Activated CD8-positive, alpha-beta T cell treated with anti-CD3 and anti-CD28 coated beads, Interleukin-2, amount 10 ng/mL, durations not matched to agents 7 days and 5 days (primary cell): ENCODE measurements at regions of chr3 and their contacts with region 1.

Region 1: GRCh38 chr3:18717598-18717997 is 292.5 kb upstream of the SATB1 start:
- DNase-seq: no peak
- ATAC-seq: peak; percentile 11
- H3K4me3 Mint-ChIP-seq: peak overlapping the region; percentile 36
- H3K27ac Mint-ChIP-seq: peak overlapping the region; percentile 95
- H3K4me1 Mint-ChIP-seq: peaks cover 75% of the 10 kb centered on the region
- H3K27me3 Mint-ChIP-seq: no peaks in the 10 kb centered on the region

Region 2: GRCh38 chr3:18424729-18425640 is 292.6 kb before region 1 on chr3 and contains the start of gene SATB1:
- CTCF ChIA-PET with region 1: no interaction called
- POLR2A ChIA-PET with region 1: interaction called, 11 read pairs
- DNase-seq: peak; percentile 79
- ATAC-seq: peak; percentile 23
- H3K4me3 Mint-ChIP-seq: peak within 1 kb of the TSS; percentile 87
- H3K27ac Mint-ChIP-seq: peak within 1 kb of the TSS; percentile 88
- H3K4me1 Mint-ChIP-seq: peaks cover 60% of the 10 kb centered on the region
- H3K27me3 Mint-ChIP-seq: no peaks in the 10 kb centered on the region
- total RNA-seq, gene SATB1: 268 to 273 TPM

Region 3: DNA sequence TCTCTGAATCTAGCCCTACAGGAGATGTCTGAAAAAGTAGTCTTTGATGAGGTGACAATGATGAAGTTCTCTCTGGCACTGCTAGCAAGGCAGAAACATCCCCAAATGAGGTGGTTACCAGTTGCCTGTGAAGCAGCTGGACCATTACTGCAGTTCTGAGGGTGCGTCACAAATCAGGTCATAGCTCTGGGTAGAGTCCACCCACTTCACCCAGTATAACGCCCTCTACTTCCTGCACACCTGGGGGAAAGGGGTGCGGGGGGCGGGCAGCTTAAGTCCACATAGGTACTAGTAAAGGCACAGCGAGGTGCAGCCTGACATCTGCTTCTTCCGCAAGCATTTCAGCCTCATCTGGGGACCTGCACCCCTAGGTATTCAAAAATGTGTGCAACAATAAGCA is 279.0 kb before region 1 on chr3:
- CTCF ChIA-PET with region 1: interaction called, 5 read pairs
- POLR2A ChIA-PET with region 1: interaction called, 55 read pairs
- DNase-seq: peak; percentile 83
- ATAC-seq: peak; percentile 79
- H3K4me3 Mint-ChIP-seq: peak overlapping the region; percentile 69
- H3K27ac Mint-ChIP-seq: peak overlapping the region; percentile 80
- H3K4me1 Mint-ChIP-seq: peaks cover 44% of the 10 kb centered on the region
- H3K27me3 Mint-ChIP-seq: no peaks in the 10 kb centered on the region

Region 4: DNA sequence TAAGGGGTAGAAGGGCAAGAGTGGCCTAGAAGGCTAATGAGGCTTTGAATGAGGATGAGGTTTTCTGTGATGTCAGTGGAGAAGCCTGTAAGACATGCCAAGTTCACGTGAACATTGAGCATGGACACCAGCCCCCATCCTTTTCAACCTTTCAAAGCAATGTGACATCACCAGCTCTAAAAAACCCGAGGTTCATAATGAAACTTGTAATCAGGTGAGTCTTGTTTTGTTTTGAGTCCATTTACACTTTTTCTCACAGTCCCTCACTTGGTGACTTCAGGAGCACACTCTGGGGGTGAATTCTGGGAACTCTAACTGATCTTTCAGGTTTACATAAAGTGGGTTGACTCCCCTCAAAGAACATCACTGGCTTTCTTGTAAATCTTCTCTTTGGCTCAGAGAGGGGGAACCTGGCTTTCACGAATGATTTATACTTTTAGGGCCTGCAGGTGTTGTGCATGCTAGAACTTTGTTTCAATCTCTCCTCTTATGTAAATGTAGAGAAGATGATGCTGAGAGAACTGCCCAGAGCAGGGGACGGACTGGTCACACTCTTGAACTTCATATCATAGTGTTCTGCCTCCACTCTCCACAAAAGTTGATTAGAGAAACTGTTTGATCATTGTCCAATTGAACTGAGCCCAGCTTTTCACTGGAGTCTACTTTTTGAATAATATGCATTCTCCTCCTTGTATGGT is 67.8 kb before region 1 on chr3:
- CTCF ChIA-PET with region 1: interaction called, 4 read pairs
- POLR2A ChIA-PET with region 1: interaction called, 14 read pairs
- DNase-seq: peak; percentile 67
- ATAC-seq: peak; percentile 79
- H3K4me3 Mint-ChIP-seq: peak overlapping the region; percentile 27
- H3K27ac Mint-ChIP-seq: peak overlapping the region; percentile 84
- H3K4me1 Mint-ChIP-seq: peaks cover 42% of the 10 kb centered on the region
- H3K27me3 Mint-ChIP-seq: no peaks in the 10 kb centered on the region

Region 5: GRCh38 chr3:18740631-18741583 is 23.3 kb after region 1 on chr3:
- CTCF ChIA-PET with region 1: interaction called, 82 read pairs
- POLR2A ChIA-PET with region 1: interaction called, 213 read pairs
- DNase-seq: peak; percentile 72
- ATAC-seq: peak; percentile 72
- H3K4me3 Mint-ChIP-seq: peak overlapping the region; percentile 76
- H3K27ac Mint-ChIP-seq: peak overlapping the region; percentile 92
- H3K4me1 Mint-ChIP-seq: peaks cover 87% of the 10 kb centered on the region
- H3K27me3 Mint-ChIP-seq: no peaks in the 10 kb centered on the region